ENCODE measurements at regions of chr9 and their contacts with region 1.

Region 1: DNA sequence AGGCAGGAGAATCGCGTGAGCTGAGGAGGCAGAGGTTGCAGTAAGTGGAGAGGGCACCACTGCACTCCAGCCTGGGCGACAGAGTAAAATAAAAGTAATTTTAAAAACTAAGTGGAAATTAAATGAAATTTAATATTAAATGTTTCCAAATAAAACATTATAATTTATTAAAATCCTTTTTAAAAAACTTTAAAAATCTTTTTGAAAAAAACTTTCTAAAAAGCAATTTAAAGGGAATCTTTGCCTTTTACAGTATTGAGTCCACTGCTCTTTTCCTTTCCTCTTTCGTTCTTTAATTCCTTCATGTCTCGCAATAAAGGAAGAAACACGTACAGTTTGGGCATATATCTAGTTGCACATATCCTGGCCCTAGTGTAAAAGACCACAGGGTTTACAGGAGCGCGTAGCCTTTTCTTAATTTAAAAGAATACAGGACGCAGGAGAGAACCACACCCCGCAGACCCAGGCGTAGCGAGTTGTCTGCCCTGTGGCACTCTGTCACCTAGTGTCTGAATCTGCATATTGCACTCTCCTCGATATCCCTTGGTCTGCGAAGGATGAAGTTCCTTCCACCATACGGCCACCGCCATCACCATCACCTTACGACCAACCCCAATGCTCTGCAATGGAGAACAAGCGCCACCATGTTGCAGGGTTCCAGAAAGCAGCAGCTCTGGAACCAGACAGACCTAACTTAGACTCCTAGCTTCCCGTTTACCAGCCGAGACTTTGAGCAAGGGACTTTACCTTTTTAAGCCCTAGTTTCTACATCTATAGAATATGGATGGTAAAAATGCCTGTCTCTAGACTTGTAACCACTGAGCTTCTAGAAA is 77.6 kb upstream of the DMRT1 start:
- DNase-seq: peak; percentile 64 to 67
- H3K4me3 ChIP-seq: no peak overlapping the region
- H3K27ac ChIP-seq: no peak overlapping the region
- H3K4me1 ChIP-seq: no peaks in the 10 kb centered on the region
- H3K27me3 ChIP-seq: no peaks in the 10 kb centered on the region
- CTCF ChIP-seq: peak; percentile 58 to 91 (median 90)
- EP300 ChIP-seq: no peak
- POLR2A ChIP-seq: no peak
- RAD21 ChIP-seq: peak; percentile 89 to 93

Region 2: DNA sequence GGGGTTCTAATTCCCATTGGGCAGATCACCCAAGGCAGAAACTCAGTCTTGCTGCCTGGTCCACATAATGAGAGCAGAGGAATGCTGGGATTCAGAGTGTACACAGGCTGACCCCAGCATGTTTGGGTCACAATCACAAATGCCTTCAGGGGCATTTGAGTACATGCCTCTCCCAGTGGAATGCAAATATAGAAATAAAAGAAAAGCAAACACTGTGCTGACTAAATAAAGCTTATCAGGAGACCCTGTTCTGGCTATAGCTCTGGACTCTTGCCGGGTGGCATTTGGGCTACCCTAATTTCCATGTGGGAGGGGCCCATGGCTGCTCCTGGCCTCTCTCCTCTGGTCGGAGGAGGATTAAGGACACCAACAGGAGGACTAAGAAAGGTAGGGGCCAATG is 427.9 kb before region 1 on chr9:
- CTCF ChIA-PET with region 1: no interaction called
- POLR2A ChIA-PET with region 1: no interaction called
- DNase-seq: no peak
- H3K4me3 ChIP-seq: no peak overlapping the region
- H3K27ac ChIP-seq: no peak overlapping the region
- H3K4me1 ChIP-seq: peaks cover 0 to 3% (median 1%) of the 10 kb centered on the region in 4 experiments; a peak in 1 of 7 replicates
- H3K27me3 ChIP-seq: no peaks in the 10 kb centered on the region
- CTCF ChIP-seq: no peak
- EP300 ChIP-seq: no peak
- POLR2A ChIP-seq: no peak
- RAD21 ChIP-seq: no peak

Region 3: DNA sequence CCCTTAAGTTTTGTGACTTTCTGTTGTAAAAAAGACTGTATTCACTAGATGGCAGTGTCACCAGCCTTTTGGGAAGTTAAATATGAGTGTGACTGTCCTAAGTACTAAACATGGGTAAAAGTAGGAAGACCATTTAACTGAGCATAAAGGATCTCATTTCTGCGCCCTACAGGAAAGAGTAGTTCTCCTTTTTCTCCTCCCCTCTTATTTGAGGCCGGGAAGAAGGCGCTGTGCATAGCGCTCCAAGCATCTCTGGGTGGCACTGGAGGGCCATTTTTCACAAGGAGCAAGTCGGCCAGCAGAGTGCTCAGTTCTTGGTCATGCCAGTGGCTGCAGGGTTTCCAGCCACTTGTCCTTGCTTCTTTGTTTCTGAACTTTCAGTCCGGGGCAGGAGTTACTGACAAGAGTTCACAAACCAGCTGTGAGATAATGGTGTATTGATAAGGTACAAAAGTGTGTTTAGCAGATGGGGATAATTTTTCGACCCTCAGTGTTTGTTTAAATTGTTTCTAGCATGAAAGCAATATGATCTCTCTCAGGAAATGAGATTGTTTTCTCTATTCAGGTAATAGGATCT is 150.0 kb before region 1 on chr9:
- CTCF ChIA-PET with region 1: interaction called, 195 read pairs
- POLR2A ChIA-PET with region 1: no interaction called
- DNase-seq: peak; percentile 64 to 66
- H3K4me3 ChIP-seq: no peak overlapping the region
- H3K27ac ChIP-seq: no peak overlapping the region
- H3K4me1 ChIP-seq: peaks cover 0 to 5% (median 1%) of the 10 kb centered on the region in 4 experiments; a peak in 1 of 7 replicates
- H3K27me3 ChIP-seq: no peaks in the 10 kb centered on the region
- CTCF ChIP-seq: peak; percentile 72 to 98 (median 90)
- EP300 ChIP-seq: no peak
- POLR2A ChIP-seq: no peak
- RAD21 ChIP-seq: peak; percentile 97 to 99

Region 4: DNA sequence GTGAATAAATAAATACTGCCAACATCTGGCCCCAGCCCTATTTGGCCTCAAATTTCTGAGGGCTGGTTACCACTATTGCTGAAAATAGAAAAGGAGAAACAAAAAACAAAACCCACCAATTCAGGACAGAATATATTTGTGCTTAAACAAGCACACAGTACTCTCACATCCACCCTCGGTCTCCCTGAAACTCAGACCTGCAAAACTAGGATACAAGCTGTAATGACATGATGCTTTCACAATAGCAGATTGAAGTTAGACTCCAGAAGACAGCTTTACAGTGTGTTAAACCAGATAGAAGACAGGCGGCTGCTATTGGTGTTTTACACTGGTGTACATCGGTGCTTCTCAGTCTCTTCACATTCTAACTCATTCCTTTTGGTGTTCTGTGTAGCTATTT is 137.3 kb before region 1 on chr9:
- CTCF ChIA-PET with region 1: interaction called, 195 read pairs
- POLR2A ChIA-PET with region 1: no interaction called
- DNase-seq: no peak
- H3K4me3 ChIP-seq: no peak overlapping the region
- H3K27ac ChIP-seq: no peak overlapping the region
- H3K4me1 ChIP-seq: peaks cover 0 to 7% (median 1%) of the 10 kb centered on the region in 4 experiments; a peak in 3 of 7 replicates
- H3K27me3 ChIP-seq: no peaks in the 10 kb centered on the region
- CTCF ChIP-seq: no peak
- EP300 ChIP-seq: no peak
- POLR2A ChIP-seq: no peak
- RAD21 ChIP-seq: no peak

Region 5: DNA sequence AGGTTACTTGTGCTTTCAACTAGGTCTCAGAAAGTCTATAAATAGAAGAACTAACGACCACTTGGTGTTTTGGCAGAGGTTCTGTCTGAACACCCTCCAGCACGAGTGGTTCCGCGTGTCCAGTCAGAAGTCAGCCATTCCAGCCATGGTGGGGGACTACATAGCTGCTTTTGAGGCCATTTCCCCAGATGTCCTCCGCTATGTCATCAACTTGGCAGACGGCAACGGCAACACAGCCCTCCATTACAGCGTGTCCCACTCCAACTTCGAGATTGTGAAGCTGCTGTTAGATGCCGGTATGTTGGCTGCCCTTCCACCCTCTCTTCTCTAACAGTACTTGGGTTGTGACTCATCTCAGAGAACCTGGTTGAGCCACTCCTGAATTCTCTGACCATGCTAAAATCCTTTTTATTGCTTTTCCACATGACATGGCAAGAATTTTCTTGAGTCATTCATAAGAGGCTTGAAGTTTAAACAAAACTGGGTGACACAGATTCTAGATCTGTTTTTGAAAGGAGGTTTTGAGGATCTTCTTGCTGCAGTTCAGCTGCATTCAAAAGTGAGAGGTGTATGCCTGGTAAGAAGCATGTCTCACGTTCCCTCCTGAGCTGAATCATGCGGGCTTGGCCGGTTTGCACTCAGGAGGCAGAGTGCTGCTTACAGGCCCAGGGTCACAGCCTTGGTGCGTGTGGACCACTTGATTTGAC is 25.5 kb before region 1 on chr9:
- CTCF ChIA-PET with region 1: interaction called, 13 read pairs
- POLR2A ChIA-PET with region 1: no interaction called
- DNase-seq: no peak
- H3K4me3 ChIP-seq: no peak overlapping the region
- H3K27ac ChIP-seq: no peak overlapping the region
- H3K4me1 ChIP-seq: no peaks in the 10 kb centered on the region
- H3K27me3 ChIP-seq: no peaks in the 10 kb centered on the region
- CTCF ChIP-seq: no peak
- EP300 ChIP-seq: no peak
- POLR2A ChIP-seq: no peak
- RAD21 ChIP-seq: no peak

Region 6: GRCh38 chr9:776086-776485 is 12.2 kb after region 1 on chr9:
- CTCF ChIA-PET with region 1: interaction called, 18 read pairs
- POLR2A ChIA-PET with region 1: no interaction called
- DNase-seq: no peak
- H3K4me3 ChIP-seq: no peak overlapping the region
- H3K27ac ChIP-seq: no peak overlapping the region
- H3K4me1 ChIP-seq: peaks cover 0 to 2% (median 0%) of the 10 kb centered on the region in 4 experiments; a peak in 1 of 7 replicates
- H3K27me3 ChIP-seq: no peaks in the 10 kb centered on the region
- CTCF ChIP-seq: no peak
- EP300 ChIP-seq: no peak
- POLR2A ChIP-seq: no peak
- RAD21 ChIP-seq: no peak

Region 7: DNA sequence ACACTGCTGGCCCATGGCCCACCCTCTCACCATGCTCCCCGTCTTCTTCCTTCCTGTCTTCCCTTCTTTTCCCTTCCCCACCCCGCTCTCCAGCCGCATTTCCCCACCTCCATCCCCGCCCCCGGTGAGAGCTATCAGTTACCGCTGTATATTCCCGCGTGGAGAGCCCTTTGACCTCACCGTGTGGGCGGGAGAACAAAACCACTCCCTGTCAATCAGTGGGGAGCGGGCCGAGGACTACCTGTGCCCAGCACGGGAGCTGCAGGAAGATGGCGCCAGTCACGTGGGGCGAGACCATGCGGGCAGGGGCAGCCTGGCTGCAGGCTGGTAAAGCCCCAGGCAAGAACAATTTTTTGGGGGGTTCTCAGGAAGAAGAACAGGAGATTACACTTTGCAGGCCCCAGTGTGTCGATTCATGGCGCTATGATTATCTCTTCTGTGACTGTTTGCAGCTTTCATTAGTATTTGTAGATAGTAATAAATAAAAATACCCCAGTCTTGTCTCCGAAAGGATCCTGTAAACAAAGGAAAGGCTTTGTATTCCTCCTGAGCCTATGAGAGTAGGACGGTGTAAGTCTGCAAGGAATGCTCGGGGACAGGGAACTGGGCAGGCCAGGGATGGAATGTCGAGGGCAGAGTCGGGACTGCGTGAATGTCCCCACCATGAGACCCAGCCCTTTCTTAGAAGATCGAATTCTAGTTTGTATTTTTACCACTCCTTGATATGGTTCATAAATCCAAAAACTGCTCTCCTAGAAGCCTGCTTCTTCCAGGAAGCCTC is 62.8 kb after region 1 on chr9:
- CTCF ChIA-PET with region 1: no interaction called
- POLR2A ChIA-PET with region 1: no interaction called
- DNase-seq: peak in 1 of 2 experiments; percentile 58
- H3K4me3 ChIP-seq: no peak overlapping the region
- H3K27ac ChIP-seq: no peak overlapping the region
- H3K4me1 ChIP-seq: peaks cover 0 to 3% (median 0%) of the 10 kb centered on the region in 4 experiments; a peak in 1 of 7 replicates
- H3K27me3 ChIP-seq: peaks cover 0 to 2% (median 0%) of the 10 kb centered on the region in 4 experiments; a peak in 1 of 7 replicates
- CTCF ChIP-seq: peak in 2 of 3 experiments; percentile 21 to 45; a peak in 2 of 4 replicates
- EP300 ChIP-seq: no peak
- POLR2A ChIP-seq: no peak
- RAD21 ChIP-seq: peak; percentile 23 to 28

Region 8: DNA sequence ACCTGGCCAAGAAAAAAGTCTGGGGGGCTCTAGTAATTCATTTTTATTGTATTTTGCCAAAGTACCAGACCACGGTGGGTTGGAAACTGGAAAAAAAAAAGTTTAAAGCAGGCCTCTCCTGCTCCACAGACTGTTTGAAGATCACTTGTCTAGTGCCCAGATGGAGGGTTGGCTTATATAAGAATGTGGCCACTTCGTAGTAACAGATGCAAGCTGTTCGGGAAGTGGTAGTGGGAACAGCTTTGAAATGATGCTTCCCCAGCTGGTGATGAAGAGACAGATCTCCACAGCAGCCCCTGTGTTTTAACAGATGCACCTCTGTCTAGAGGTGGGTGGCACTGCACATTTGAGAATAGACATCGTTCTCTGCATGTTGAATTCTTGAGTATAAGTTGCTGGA is 158.3 kb after region 1 on chr9:
- CTCF ChIA-PET with region 1: no interaction called
- POLR2A ChIA-PET with region 1: no interaction called
- DNase-seq: no peak
- H3K4me3 ChIP-seq: no peak overlapping the region
- H3K27ac ChIP-seq: no peak overlapping the region
- H3K4me1 ChIP-seq: peaks cover 0 to 2% (median 0%) of the 10 kb centered on the region in 4 experiments; a peak in 1 of 7 replicates
- H3K27me3 ChIP-seq: no peaks in the 10 kb centered on the region
- CTCF ChIP-seq: no peak
- EP300 ChIP-seq: no peak
- POLR2A ChIP-seq: no peak
- RAD21 ChIP-seq: no peak

Region 9: GRCh38 chr9:935344-935965 is 171.5 kb after region 1 on chr9:
- CTCF ChIA-PET with region 1: no interaction called
- POLR2A ChIA-PET with region 1: no interaction called
- DNase-seq: no peak
- H3K4me3 ChIP-seq: no peak overlapping the region
- H3K27ac ChIP-seq: no peak overlapping the region
- H3K4me1 ChIP-seq: no peaks in the 10 kb centered on the region
- H3K27me3 ChIP-seq: no peaks in the 10 kb centered on the region
- CTCF ChIP-seq: no peak
- EP300 ChIP-seq: no peak
- POLR2A ChIP-seq: no peak
- RAD21 ChIP-seq: no peak

Measured in H1 (cell line).